Activated CD4-positive, alpha-beta T cell treated with anti-CD3 and anti-CD28 coated beads for 36 hours (primary cell): ENCODE measurements at regions of chr20 and their contacts with region 1.

Region 1: DNA sequence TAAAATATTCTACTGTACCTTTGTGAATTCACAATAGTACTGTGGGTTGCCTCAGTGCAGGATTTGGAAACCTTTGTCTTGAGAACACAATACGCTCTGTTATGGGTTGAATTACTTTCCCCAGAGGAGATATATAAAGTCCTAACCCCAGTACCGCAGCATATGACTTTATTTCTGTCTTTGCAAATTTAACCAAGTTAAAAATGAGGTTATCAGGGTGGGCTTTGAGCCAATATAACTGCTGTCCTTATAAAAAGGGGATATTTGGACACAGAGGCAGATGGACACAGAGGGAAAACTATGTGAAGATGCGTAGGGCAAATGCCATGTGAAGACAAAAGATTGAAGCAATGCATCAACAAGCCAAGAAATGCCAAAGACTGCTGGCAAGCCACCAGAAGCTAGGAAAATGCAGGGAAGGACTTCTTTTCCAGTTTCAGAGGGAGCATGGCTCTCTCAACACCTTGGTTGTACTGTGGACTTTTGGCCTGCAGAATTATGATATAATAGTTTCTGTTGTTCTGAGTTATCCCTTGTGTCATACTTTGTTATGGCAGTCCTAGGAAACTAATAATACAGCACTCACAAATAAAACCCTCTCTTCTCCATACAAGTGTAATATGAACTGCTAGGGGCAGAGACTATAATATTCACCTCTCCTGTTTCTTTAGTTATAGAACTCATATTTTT is 292.6 kb upstream of the SPTLC3 start:
- DNase-seq: no peak
- ATAC-seq: no peak
- H3K4me3 Mint-ChIP-seq: no peak overlapping the region
- H3K27ac Mint-ChIP-seq: no peak overlapping the region
- H3K4me1 Mint-ChIP-seq: no peaks in the 10 kb centered on the region
- H3K27me3 Mint-ChIP-seq: no peaks in the 10 kb centered on the region

Region 2: GRCh38 chr20:12659942-12660341 is 56.2 kb before region 1 on chr20:
- CTCF ChIA-PET with region 1: no interaction called
- POLR2A ChIA-PET with region 1: no interaction called
- intact Hi-C with region 1: loop called in 1 of 2 experiments (anchors 10 kb)
- DNase-seq: no peak
- ATAC-seq: no peak
- H3K4me3 Mint-ChIP-seq: no peak overlapping the region
- H3K27ac Mint-ChIP-seq: no peak overlapping the region
- H3K4me1 Mint-ChIP-seq: no peaks in the 10 kb centered on the region
- H3K27me3 Mint-ChIP-seq: no peaks in the 10 kb centered on the region